Caco-2 (cell line): ENCODE measurements at regions of chr18 and their contacts with region 1.

Region 1: DNA sequence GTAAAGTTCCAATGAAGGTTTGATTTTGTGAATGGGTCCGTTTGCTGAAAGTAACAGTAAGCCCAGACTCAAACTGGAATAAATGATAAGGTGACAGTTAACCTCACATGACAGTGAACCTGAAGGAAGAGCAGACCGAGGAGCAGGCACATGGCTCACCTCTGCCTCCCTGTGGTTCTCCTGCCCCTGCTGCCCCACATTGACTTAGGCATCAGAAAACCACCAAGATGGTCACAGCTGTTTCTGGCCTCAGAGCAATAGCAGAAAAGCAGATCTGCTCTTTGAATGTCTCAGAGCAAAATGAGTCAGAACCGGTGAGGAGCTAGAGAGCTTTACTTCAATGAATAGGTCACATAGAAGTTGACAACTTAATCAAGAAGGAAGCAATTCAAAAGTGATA is 487.6 kb downstream of the METTL4 start:
- DNase-seq: peak in 1 of 2 experiments; percentile 39
- H3K4me3 ChIP-seq: no peak overlapping the region
- H3K4me3 Mint-ChIP-seq: no peak overlapping the region
- H3K27ac Mint-ChIP-seq: no peak overlapping the region
- H3K4me1 ChIP-seq: no peaks in the 10 kb centered on the region; the same call in 1 of the 2 replicates
- H3K4me1 Mint-ChIP-seq: peaks cover 7% of the 10 kb centered on the region
- H3K27me3 ChIP-seq: no peaks in the 10 kb centered on the region
- H3K27me3 Mint-ChIP-seq: no peaks in the 10 kb centered on the region
- CTCF ChIP-seq: peak; percentile 64 to 69

Region 2: DNA sequence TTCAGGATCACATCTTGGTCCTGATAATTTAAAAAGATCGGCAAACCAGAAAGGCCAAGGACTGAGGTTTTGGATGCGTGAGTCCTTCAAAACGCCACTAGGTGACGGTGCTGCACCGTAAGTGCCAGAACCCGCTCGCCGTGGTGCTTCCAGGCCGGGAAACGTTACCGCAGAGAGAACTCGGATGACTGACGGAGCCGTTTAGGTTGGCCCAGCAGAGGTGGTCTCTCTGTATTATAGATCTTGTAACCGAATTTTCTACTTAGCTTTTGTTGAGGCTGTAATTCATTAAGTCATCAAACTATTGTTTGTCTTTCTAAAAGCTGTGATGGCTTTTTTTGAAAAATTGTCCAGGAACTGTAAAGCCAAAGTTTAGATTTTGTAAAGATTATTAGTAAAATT is 1218.8 kb before region 1 on chr18:
- CTCF ChIA-PET with region 1: no interaction called
- POLR2A ChIA-PET with region 1: no interaction called
- intact Hi-C with region 1: loop called (anchors 10 kb)
- DNase-seq: peak; percentile 73 to 74
- H3K4me3 ChIP-seq: no peak overlapping the region
- H3K4me3 Mint-ChIP-seq: no peak overlapping the region
- H3K27ac Mint-ChIP-seq: no peak overlapping the region
- H3K4me1 ChIP-seq: no peaks in the 10 kb centered on the region
- H3K4me1 Mint-ChIP-seq: no peaks in the 10 kb centered on the region
- H3K27me3 ChIP-seq: no peaks in the 10 kb centered on the region
- H3K27me3 Mint-ChIP-seq: peaks cover 12% of the 10 kb centered on the region
- CTCF ChIP-seq: peak; percentile 93 to 99

Region 3: GRCh38 chr18:1663879-1664705 is 419.6 kb before region 1 on chr18:
- CTCF ChIA-PET with region 1: no interaction called
- POLR2A ChIA-PET with region 1: no interaction called
- intact Hi-C with region 1: loop called (anchors 10 kb)
- DNase-seq: peak; percentile 58 to 78
- H3K4me3 ChIP-seq: no peak overlapping the region
- H3K4me3 Mint-ChIP-seq: no peak overlapping the region
- H3K27ac Mint-ChIP-seq: no peak overlapping the region
- H3K4me1 ChIP-seq: no peaks in the 10 kb centered on the region
- H3K4me1 Mint-ChIP-seq: no peaks in the 10 kb centered on the region
- H3K27me3 ChIP-seq: no peaks in the 10 kb centered on the region
- H3K27me3 Mint-ChIP-seq: no peaks in the 10 kb centered on the region
- CTCF ChIP-seq: peak; percentile 90 to 94

Region 4: DNA sequence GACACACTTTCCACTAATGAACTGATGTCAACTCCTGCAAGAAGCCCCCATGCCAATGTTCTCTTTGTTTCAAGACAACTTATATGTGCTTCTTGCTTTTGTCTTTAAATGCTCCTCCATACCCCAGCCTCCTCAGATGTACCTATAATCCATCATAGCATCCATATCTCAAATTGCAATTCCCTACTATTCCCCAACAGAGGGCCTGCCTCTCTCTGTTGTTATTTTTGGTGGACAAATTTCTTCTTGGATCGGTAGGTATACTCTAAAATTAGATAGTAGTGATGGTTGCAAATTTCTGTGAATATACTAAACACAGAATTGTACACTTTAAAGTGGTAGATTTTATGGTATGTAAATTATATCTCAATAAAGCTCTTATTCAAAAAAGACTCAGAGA is 332.4 kb before region 1 on chr18:
- CTCF ChIA-PET with region 1: no interaction called
- POLR2A ChIA-PET with region 1: no interaction called
- intact Hi-C with region 1: loop called (anchors 10 kb)
- DNase-seq: no peak
- H3K4me3 ChIP-seq: no peak overlapping the region
- H3K4me3 Mint-ChIP-seq: no peak overlapping the region
- H3K27ac Mint-ChIP-seq: no peak overlapping the region
- H3K4me1 ChIP-seq: no peaks in the 10 kb centered on the region
- H3K4me1 Mint-ChIP-seq: no peaks in the 10 kb centered on the region
- H3K27me3 ChIP-seq: no peaks in the 10 kb centered on the region
- H3K27me3 Mint-ChIP-seq: peaks cover 5% of the 10 kb centered on the region
- CTCF ChIP-seq: peak in 1 of 2 experiments; percentile 10

Region 5: GRCh38 chr18:1914490-1914889 is 169.2 kb before region 1 on chr18:
- CTCF ChIA-PET with region 1: no interaction called
- POLR2A ChIA-PET with region 1: interaction called, 3 read pairs
- intact Hi-C with region 1: loop called (anchors 1 kb)
- DNase-seq: peak; percentile 32 to 41
- H3K4me3 ChIP-seq: no peak overlapping the region
- H3K4me3 Mint-ChIP-seq: no peak overlapping the region
- H3K27ac Mint-ChIP-seq: no peak overlapping the region
- H3K4me1 ChIP-seq: no peaks in the 10 kb centered on the region
- H3K4me1 Mint-ChIP-seq: no peaks in the 10 kb centered on the region
- H3K27me3 ChIP-seq: no peaks in the 10 kb centered on the region
- H3K27me3 Mint-ChIP-seq: no peaks in the 10 kb centered on the region
- CTCF ChIP-seq: peak; percentile 41 to 63

Region 6: GRCh38 chr18:2002151-2002550 is 81.5 kb before region 1 on chr18:
- CTCF ChIA-PET with region 1: no interaction called
- POLR2A ChIA-PET with region 1: no interaction called
- intact Hi-C with region 1: loop called (anchors 1 kb)
- DNase-seq: peak; percentile 36 to 41
- H3K4me3 ChIP-seq: no peak overlapping the region
- H3K4me3 Mint-ChIP-seq: peak overlapping the region; percentile 56
- H3K27ac Mint-ChIP-seq: peak overlapping the region; percentile 92
- H3K4me1 ChIP-seq: peaks cover 39% of the 10 kb centered on the region
- H3K4me1 Mint-ChIP-seq: peaks cover 44% of the 10 kb centered on the region
- H3K27me3 ChIP-seq: no peaks in the 10 kb centered on the region
- H3K27me3 Mint-ChIP-seq: no peaks in the 10 kb centered on the region
- CTCF ChIP-seq: no peak

Region 7: DNA sequence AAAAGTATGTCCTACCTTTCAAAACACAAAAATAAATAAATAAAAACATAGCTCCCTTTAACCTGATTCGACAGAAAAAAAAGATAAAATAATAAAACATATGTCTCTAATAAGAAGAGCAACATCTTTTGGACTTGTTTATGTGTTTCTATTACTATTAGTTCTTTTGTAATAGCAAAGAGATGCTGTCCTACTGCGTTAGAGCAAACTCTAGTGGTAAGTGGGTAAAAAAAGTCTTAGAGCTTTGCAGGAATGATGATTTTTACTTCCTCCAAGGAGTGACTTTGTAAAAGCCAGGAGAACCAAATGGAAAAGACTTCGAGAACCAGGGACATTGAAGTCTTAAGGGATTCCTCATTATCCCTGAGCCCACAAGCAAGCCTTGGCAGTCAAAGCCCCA is 37.5 kb after region 1 on chr18:
- CTCF ChIA-PET with region 1: no interaction called
- POLR2A ChIA-PET with region 1: no interaction called
- intact Hi-C with region 1: no loop called
- DNase-seq: no peak
- H3K4me3 ChIP-seq: no peak overlapping the region
- H3K4me3 Mint-ChIP-seq: no peak overlapping the region
- H3K27ac Mint-ChIP-seq: no peak overlapping the region
- H3K4me1 ChIP-seq: no peaks in the 10 kb centered on the region
- H3K4me1 Mint-ChIP-seq: no peaks in the 10 kb centered on the region
- H3K27me3 ChIP-seq: no peaks in the 10 kb centered on the region
- H3K27me3 Mint-ChIP-seq: no peaks in the 10 kb centered on the region
- CTCF ChIP-seq: peak in 1 of 2 experiments; percentile 10

Region 8: DNA sequence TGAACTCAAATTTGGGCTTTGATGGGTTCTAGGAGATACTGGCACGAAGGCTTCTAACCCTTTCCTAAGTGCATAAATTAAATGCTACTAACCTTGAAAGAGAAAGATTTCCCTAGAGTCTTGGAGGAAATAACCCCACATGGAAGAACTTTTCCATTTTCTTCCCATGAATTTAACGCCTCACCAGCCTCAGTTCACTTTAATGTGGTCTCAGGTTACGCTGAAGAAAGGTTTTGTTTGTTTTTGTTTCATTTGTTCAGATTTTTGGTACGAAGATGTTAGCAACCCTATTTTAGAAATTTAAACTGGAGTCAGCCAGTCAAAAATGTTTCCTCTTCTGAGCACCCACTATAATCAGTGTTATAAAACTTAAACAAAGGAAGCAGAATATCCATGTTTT is 456.9 kb after region 1 on chr18:
- CTCF ChIA-PET with region 1: no interaction called
- POLR2A ChIA-PET with region 1: no interaction called
- intact Hi-C with region 1: loop called (anchors 5 kb)
- DNase-seq: no peak
- H3K4me3 ChIP-seq: no peak overlapping the region
- H3K4me3 Mint-ChIP-seq: no peak overlapping the region
- H3K27ac Mint-ChIP-seq: no peak overlapping the region
- H3K4me1 ChIP-seq: no peaks in the 10 kb centered on the region
- H3K4me1 Mint-ChIP-seq: no peaks in the 10 kb centered on the region
- H3K27me3 ChIP-seq: no peaks in the 10 kb centered on the region
- H3K27me3 Mint-ChIP-seq: no peaks in the 10 kb centered on the region
- CTCF ChIP-seq: no peak